Activated CD4-positive, alpha-beta T cell treated with anti-CD3 and anti-CD28 coated beads, Interleukin-2, amount 10 ng/mL, durations not matched to agents 24 days and 14 days (primary cell): ENCODE measurements at regions of chr10 and their contacts with region 1.

Region 1: GRCh38 chr10:119596537-119597404 is at the start of gene TIAL1:
- DNase-seq: peak; percentile 97
- H3K4me3 Mint-ChIP-seq: peak within 1 kb of the TSS; percentile 90
- H3K27ac Mint-ChIP-seq: peak within 1 kb of the TSS; percentile 94
- H3K4me1 Mint-ChIP-seq: peaks cover 45% of the 10 kb centered on the region
- H3K27me3 Mint-ChIP-seq: no peaks in the 10 kb centered on the region
- total RNA-seq, gene TIAL1: 212 and 218 TPM in 2 replicates

Region 2: GRCh38 chr10:119178372-119179119 is 418.2 kb before region 1 on chr10 and contains the start of gene PRDX3:
- intact Hi-C with region 1: loop called (anchors 5 kb)
- DNase-seq: peak; percentile 98
- H3K4me3 Mint-ChIP-seq: peak within 1 kb of the TSS; percentile 98
- H3K27ac Mint-ChIP-seq: peak within 1 kb of the TSS; percentile 99
- H3K4me1 Mint-ChIP-seq: peaks cover 39% of the 10 kb centered on the region
- H3K27me3 Mint-ChIP-seq: no peaks in the 10 kb centered on the region
- total RNA-seq, gene PRDX3: 179 and 180 TPM in 2 replicates

Region 3: DNA sequence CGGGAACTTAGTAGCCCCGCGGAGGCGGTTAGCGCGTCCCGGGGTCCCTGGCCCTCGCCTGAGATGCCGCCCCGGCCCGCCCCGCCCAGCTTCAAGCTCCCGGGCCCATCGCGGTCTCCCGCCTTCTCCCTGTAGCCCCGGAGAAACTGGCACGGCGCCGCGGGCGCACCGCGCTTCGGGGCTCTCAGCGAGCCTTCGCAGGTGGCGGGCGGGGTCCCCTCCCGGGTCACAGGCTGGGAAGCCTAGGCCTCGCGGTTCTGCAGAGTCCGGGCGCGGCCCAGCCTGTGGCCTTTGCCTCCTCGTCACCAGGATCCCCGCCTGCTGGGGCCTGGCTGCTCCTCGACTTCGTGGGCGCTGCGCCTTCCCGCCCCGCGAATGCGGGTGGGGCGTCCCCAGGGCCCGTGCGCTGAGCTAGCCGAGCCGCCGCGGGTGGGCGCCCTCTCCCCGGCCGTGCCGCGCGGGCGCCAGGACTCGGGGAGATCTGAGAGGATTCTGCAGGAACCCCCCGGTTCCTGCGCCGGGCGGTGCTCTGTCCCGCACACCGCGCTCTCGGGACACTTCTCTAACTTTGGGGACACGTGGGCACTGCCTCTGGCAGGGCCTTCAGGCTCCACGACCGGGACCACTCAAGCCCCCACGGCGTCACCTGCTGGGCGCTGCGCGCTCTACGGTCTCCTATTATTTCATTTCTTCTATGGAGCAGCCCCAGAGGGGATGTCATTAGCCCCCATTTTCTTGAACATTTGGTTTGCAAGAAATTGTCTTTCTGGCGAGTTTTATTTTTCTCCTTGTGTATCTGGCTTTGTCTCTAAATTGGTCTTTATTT is 53.6 kb before region 1 on chr10:
- intact Hi-C with region 1: loop called (anchors 1 kb)
- DNase-seq: peak; percentile 89
- H3K4me3 Mint-ChIP-seq: peak overlapping the region; percentile 79
- H3K27ac Mint-ChIP-seq: peak overlapping the region; percentile 91
- H3K4me1 Mint-ChIP-seq: peaks cover 35% of the 10 kb centered on the region
- H3K27me3 Mint-ChIP-seq: peaks cover 20% of the 10 kb centered on the region

Region 4: GRCh38 chr10:119650692-119651513 is 54.1 kb after region 1 on chr10 and contains the start of gene BAG3:
- intact Hi-C with region 1: loop called (anchors 1 kb)
- DNase-seq: peak; percentile 93
- H3K4me3 Mint-ChIP-seq: peak within 1 kb of the TSS; percentile 99
- H3K27ac Mint-ChIP-seq: peak within 1 kb of the TSS; percentile 99
- H3K4me1 Mint-ChIP-seq: peaks cover 40% of the 10 kb centered on the region
- H3K27me3 Mint-ChIP-seq: no peaks in the 10 kb centered on the region
- total RNA-seq, gene BAG3: 27.7 and 29.1 TPM in 2 replicates

Region 5: DNA sequence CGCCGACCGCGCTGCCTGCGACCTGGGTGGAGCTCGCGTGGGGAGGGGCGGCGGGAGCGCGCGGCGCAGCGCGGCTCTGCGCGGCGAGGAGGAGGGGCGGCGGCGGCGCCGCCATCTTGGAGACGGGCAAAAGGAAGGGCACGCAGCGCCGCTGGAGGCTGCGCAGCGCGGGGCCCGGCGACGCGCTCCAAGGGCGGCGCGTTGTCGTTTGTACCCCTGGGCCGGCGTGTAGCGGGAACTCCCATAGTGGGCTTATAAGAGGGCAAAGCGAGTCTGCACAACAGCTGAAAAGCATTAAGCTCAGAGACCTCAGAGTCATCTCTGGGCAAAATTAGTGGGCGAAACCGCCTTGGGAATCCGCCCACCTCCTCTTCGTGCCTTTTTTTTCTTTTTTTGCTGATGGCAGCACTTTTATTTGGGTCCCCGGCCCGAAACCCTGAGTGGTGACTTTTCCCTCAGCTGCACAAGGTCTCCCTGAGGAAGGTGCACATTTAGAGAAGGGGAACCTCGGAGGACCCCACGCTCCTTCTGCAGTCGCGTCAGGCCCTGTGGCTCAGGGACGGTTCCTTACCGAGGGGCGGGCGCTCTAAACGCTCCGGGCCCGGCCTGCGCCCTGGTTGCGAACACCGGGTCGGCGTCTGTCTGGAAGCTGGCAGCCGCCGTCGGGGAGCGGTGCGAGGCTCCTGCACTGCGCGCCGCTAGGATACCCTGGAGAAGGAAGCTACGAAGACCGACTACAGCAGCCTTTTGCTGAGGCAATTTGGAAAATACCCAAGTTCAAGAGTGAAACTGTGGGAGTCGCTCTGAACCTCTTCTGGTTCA is 276.3 kb after region 1 on chr10:
- intact Hi-C with region 1: loop called (anchors 1 kb)
- DNase-seq: peak; percentile 96
- H3K4me3 Mint-ChIP-seq: peak overlapping the region; percentile 84
- H3K27ac Mint-ChIP-seq: peak overlapping the region; percentile 91
- H3K4me1 Mint-ChIP-seq: peaks cover 29% of the 10 kb centered on the region
- H3K27me3 Mint-ChIP-seq: no peaks in the 10 kb centered on the region

Region 6: DNA sequence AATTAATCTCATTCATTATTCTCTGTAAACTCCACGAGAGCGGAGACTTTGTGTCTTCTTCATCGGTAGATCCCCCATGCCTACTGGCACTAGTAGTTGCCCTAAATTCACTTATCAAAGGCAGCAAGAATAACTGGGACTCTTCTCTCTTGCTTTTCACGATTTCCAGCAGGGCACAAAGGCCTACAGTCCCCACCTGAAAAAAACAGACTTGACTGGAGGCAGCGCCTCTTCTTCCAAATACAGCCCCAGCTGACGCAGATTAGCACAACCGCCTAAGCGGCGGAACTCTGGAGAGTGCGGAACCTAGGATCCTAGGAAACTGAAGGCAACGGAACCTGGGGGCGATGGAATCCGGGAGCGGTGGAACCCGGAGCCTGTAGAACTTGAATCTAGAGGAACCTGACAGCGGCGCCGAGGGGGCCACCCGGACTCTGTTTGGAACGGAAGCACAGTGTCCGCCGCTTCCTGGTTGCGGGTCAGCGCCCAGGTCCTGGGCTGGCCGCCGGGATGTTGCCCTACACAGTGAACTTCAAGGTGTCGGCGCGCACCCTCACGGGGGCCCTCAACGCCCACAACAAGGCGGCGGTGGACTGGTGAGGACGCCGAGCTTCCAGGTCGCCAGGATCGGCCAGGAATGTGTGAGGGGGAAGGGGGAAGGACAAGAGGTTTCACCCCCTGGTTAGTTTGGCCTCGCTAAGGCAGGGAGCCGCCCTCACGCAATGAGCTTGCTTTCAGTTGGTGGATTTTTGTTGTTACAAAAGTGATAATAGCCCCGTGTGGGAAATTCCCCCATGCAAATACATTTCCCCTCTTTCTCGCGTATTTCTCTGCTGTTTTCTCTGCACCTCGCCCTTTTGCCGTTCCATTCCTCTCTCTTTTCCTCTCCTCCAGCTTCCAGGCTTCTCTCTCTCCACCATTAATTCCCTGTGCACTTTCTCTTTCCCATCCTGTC is 1254.4 kb after region 1 on chr10 and contains the start of gene WDR11:
- intact Hi-C with region 1: loop called (anchors 10 kb)
- DNase-seq: peak; percentile 91
- H3K4me3 Mint-ChIP-seq: peak within 1 kb of the TSS; percentile 99
- H3K27ac Mint-ChIP-seq: peak within 1 kb of the TSS; percentile 95
- H3K4me1 Mint-ChIP-seq: peaks cover 29% of the 10 kb centered on the region
- H3K27me3 Mint-ChIP-seq: no peaks in the 10 kb centered on the region
- total RNA-seq, gene WDR11: 48.2 and 50.3 TPM in 2 replicates